Activated CD4-positive, alpha-beta T cell treated with anti-CD3 and anti-CD28 coated beads for 36 hours (primary cell): ENCODE measurements at regions of chr21 and their contacts with region 1.

Region 1: GRCh38 chr21:38805328-38806152 is at the start of gene ETS2:
- DNase-seq: peak; percentile 89
- ATAC-seq: peak; percentile 74
- H3K4me3 Mint-ChIP-seq: peak within 1 kb of the TSS; percentile 86
- H3K27ac Mint-ChIP-seq: peak within 1 kb of the TSS; percentile 96
- H3K4me1 Mint-ChIP-seq: peaks cover 49% of the 10 kb centered on the region
- H3K27me3 Mint-ChIP-seq: no peaks in the 10 kb centered on the region
- total RNA-seq, gene ETS2: 44.7 to 61.9 TPM

Region 2: GRCh38 chr21:37072988-37073416 is 1732.5 kb before region 1 on chr21 and contains the starts of genes PIGP and TTC3:
- CTCF ChIA-PET with region 1: no interaction called
- POLR2A ChIA-PET with region 1: no interaction called
- intact Hi-C with region 1: loop called in 1 of 2 experiments (anchors 10 kb)
- DNase-seq: peak; percentile 97
- ATAC-seq: peak; percentile 74
- H3K4me3 Mint-ChIP-seq: peak within 1 kb of the TSS; percentile 99
- H3K27ac Mint-ChIP-seq: peak within 1 kb of the TSS; percentile 92
- H3K4me1 Mint-ChIP-seq: peaks cover 48% of the 10 kb centered on the region
- H3K27me3 Mint-ChIP-seq: no peaks in the 10 kb centered on the region
- total RNA-seq, gene PIGP: 32.8 to 41.0 TPM
- total RNA-seq, gene TTC3: 65.1 to 78.9 TPM

Region 3: DNA sequence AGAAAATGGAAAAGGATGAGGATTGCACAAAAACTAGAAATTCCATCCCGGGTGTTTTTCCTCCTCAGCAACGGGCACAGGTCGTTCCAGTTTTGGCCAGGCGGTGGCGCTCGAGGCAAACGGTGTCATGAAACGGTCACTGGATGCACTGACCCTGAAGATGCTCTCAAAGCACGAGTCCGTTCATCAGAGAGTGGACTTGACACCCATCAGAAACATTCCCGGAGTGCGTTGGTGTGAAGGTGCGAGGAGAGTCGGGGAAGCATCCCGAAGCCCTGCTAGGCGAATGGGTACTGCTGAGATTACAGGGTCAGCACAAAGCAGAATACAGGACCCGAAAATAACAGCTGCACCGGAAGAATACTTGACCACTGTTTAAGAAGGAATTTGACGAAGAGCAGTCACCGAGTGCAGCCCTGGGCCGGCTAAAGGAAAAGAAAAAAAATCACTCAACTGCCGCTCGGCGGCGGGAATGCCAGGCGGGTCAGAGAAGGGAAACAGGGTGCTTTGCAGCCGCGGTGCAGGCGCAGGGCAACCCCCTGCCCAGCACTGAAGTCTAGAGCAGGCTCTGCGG is 71.5 kb before region 1 on chr21:
- CTCF ChIA-PET with region 1: interaction called, 5 read pairs
- POLR2A ChIA-PET with region 1: no interaction called
- intact Hi-C with region 1: loop called (anchors 1 to 2 kb)
- DNase-seq: peak; percentile 84
- ATAC-seq: peak; percentile 60
- H3K4me3 Mint-ChIP-seq: peak overlapping the region; percentile 74
- H3K27ac Mint-ChIP-seq: peak overlapping the region; percentile 67
- H3K4me1 Mint-ChIP-seq: peaks cover 11% of the 10 kb centered on the region
- H3K27me3 Mint-ChIP-seq: peaks cover 17% of the 10 kb centered on the region

Region 4: DNA sequence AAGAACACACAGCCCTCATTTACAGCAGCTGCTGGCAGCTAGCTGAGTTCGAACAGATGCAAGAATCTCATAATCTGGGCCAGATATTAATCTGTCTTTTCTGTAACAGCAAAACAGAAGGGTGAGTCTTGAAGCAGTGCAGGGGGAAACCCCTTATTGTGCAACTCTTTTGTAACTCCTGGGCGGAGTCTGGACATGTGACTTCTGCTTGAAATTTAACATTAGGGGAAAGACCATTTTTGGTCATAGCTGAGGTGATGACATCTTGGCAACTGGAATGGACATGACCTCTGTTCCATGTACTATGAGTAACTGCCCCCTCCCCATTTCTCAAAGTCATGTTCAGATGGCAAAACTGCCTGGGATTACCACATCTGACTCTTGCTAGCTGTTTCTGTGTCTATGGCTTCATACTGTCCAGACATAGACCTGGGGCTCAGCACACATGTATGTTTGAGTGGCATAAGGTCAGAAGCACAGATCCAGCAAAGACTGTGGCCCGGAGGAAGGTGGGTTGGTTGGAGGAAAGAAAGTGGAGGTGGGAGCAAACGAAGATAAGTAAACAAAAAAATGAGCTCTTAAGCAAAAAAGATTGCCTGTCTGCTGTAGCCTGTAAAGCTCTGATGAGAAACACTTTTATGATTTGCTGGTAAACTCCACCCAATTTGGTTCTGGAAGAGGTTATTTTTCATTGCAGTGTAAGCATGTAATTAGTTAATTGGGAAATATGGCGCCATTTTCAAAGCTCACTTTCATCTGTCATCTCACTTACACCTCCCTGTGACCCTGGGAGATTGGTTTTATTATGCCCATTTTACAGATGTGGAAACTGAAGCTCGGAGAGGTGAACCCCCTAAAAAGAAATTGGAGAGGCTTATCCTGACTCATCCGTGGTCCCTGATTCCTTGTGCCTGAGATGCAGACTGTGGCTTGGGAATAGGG is 26.3 kb after region 1 on chr21:
- CTCF ChIA-PET with region 1: interaction called, 6 read pairs
- POLR2A ChIA-PET with region 1: interaction called, 3 read pairs
- intact Hi-C with region 1: loop called in 1 of 2 experiments (anchors 2 kb)
- DNase-seq: peak; percentile 75
- ATAC-seq: peak; percentile 97
- H3K4me3 Mint-ChIP-seq: no peak overlapping the region
- H3K27ac Mint-ChIP-seq: peak overlapping the region; percentile 86
- H3K4me1 Mint-ChIP-seq: peaks cover 17% of the 10 kb centered on the region
- H3K27me3 Mint-ChIP-seq: no peaks in the 10 kb centered on the region

Region 5: GRCh38 chr21:39137248-39138178 is 332.0 kb after region 1 on chr21:
- CTCF ChIA-PET with region 1: no interaction called
- POLR2A ChIA-PET with region 1: no interaction called
- intact Hi-C with region 1: loop called in 1 of 2 experiments (anchors 5 kb)
- DNase-seq: peak; percentile 26
- ATAC-seq: peak; percentile 42
- H3K4me3 Mint-ChIP-seq: no peak overlapping the region
- H3K27ac Mint-ChIP-seq: no peak overlapping the region
- H3K4me1 Mint-ChIP-seq: no peaks in the 10 kb centered on the region
- H3K27me3 Mint-ChIP-seq: no peaks in the 10 kb centered on the region

Region 6: DNA sequence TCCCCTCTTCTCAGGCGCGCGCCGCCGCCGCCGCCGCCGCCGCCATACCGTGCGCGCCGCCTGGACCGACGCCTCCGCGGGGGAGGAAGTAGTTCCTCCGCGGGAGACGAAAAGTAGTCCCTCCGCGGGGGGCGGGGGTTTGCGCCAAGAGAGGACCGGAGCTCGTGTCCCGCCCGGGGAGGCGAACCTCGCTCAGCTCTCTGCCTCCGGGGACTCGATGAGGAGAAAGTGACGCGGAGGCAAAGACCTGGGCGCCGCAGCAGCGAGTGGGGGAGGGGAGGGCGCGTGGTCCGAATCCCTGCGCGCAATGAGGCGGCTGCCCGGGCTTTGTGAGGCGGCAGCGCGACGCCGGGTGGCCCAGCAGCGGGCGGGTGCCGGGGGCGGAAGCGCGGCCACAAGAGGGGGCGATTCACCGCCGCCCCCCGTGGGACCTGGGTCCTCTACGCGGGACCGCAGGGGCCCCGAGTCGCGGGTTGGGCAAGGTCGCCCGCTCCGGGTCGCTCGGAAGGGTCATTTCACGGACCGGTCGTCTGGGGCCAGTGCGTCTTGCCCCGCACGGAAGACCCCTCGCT is 508.1 kb after region 1 on chr21 and contains the start of gene BRWD1:
- CTCF ChIA-PET with region 1: no interaction called
- POLR2A ChIA-PET with region 1: no interaction called
- intact Hi-C with region 1: loop called (anchors 2 to 5 kb)
- DNase-seq: peak; percentile 85
- ATAC-seq: peak; percentile 42
- H3K4me3 Mint-ChIP-seq: peak within 1 kb of the TSS; percentile 92
- H3K27ac Mint-ChIP-seq: peak within 1 kb of the TSS; percentile 96
- H3K4me1 Mint-ChIP-seq: peaks cover 39% of the 10 kb centered on the region
- H3K27me3 Mint-ChIP-seq: no peaks in the 10 kb centered on the region
- total RNA-seq, gene BRWD1: 19.1 to 24.5 TPM

Region 7: DNA sequence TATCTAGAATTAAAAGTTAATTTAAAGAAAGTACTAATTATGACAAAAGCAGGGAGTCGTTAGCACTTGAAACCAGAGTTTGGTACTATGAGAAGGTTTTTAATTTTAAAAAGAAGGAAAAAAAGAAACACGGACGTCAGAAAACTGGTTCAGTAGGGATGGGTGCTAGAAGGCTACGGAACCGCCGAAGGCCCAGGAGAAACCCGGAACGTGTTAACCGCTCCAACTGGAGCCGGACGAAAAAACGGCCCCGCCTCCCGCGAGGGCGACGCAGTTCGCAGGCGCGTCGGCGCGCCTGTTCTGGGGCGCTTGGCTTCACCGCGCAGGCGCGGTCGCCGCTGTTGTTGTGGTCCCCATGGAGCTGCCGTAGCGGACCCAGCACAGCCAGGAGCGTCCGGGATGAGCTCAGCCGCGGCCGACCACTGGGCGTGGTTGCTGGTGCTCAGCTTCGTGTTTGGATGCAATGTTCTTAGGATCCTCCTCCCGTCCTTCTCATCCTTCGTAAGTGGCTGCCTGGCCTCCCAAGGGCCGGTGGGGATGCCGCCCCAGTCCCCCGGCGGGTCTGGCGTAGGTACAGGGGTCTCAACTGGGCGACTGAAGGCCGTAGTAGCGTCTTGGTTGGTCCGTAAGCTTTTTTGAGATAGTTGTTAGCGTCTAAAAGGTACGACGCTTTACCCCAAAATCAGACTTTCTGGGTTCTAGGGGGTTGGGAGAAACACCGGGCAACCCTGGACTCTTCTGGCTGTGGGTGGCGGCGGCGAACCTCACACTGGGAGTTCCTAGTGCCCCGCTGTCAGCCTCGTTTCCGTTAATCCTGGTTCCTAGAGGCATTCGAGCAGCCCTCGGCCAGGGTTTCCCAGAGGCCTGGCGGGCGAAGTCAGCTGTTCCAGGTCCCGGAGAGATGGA is 574.7 kb after region 1 on chr21:
- CTCF ChIA-PET with region 1: no interaction called
- POLR2A ChIA-PET with region 1: no interaction called
- intact Hi-C with region 1: loop called in 1 of 2 experiments (anchors 2 kb)
- DNase-seq: peak; percentile 96
- ATAC-seq: peak; percentile 98
- H3K4me3 Mint-ChIP-seq: peak overlapping the region; percentile 84
- H3K27ac Mint-ChIP-seq: peak overlapping the region; percentile 64
- H3K4me1 Mint-ChIP-seq: peaks cover 23% of the 10 kb centered on the region
- H3K27me3 Mint-ChIP-seq: no peaks in the 10 kb centered on the region